ENCODE measurements at regions of chr16 and their contacts with region 1.

Region 1: GRCh38 chr16:106623-107324 is 28.7 kb downstream of the MPG start:
- DNase-seq: peak; percentile 68
- ATAC-seq: peak; percentile 87
- H3K4me3 Mint-ChIP-seq: no peak overlapping the region
- H3K27ac Mint-ChIP-seq: no peak overlapping the region
- H3K4me1 Mint-ChIP-seq: peaks cover 2% of the 10 kb centered on the region
- H3K27me3 Mint-ChIP-seq: no peaks in the 10 kb centered on the region

Region 2: GRCh38 chr16:84718-85406 is 21.9 kb before region 1 on chr16:
- CTCF ChIA-PET with region 1: interaction called, 10 read pairs
- DNase-seq: peak; percentile 89
- ATAC-seq: peak; percentile 86
- H3K4me3 Mint-ChIP-seq: no peak overlapping the region
- H3K27ac Mint-ChIP-seq: peak overlapping the region; percentile 92
- H3K4me1 Mint-ChIP-seq: peaks cover 25% of the 10 kb centered on the region
- H3K27me3 Mint-ChIP-seq: no peaks in the 10 kb centered on the region

Region 3: DNA sequence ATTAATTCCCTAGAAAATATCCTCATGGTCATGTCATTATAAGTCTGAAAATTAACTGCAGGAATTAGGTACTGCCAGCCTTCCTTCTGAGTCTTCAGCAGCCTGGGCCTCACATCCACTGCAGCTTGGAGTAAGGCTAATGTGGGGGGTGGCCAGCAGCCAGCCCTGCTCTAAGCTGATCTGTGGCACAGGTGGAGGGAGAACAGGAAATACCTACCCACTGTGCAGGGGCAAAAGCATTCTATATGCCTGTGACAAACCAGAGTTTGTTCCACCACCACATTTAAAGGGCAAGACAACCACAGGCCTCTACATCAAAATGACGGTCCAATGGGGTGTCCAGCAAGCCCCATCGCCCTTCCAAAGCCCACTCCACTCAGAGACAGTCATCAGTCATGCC is 22.3 kb after region 1 on chr16:
- CTCF ChIA-PET with region 1: interaction called, 11 read pairs
- DNase-seq: no peak
- ATAC-seq: peak; percentile 42
- H3K4me3 Mint-ChIP-seq: no peak overlapping the region
- H3K27ac Mint-ChIP-seq: no peak overlapping the region
- H3K4me1 Mint-ChIP-seq: peaks cover 34% of the 10 kb centered on the region
- H3K27me3 Mint-ChIP-seq: no peaks in the 10 kb centered on the region

Region 4: DNA sequence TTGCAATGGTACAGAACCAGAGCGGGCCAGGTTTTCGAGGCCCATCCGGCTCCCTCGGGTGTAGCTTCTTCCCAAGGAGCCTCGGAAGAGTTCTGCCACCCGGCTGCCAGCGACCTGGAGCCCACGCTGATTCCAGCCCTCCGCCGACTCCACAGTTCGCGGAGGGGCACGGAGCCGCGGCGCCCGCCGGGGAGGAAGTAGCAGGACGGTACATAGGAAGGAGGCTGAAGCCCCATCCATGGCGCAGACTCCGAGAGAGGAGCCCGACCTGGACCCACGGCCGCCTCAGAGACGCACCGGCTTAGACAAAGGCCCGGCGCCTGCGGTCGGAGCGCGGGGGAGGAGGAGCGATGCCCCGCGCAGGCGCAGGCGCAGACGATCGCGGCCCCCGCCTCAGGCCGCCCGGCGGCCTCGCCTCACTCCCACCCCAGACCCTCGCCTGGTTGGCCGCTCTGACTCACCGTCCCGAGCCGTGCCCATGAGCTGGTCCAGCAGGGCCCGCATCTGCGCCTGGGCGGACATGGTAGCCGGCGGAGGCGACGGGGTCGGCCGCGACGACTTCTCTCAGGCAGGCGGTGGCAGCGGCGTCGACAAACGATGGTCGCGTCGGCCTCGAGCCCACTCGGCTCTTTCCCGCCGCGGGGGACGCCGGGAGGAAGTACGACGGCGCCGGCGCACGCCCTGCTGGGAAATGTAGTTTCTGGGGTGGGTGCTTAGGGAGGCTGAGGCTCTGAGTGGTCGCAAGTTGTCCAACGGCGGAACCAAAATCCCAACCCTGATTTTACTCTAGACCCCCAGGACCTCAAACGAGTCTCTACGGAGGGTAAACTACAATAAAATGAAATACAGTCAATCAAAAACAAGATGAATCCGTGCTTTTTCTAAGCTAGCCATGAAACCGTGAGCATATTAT is 122.3 kb after region 1 on chr16 and contains the start of gene LUC7L:
- CTCF ChIA-PET with region 1: interaction called, 12 read pairs
- DNase-seq: peak; percentile 92
- ATAC-seq: peak; percentile 93
- H3K4me3 Mint-ChIP-seq: peak within 1 kb of the TSS; percentile 81
- H3K27ac Mint-ChIP-seq: peak within 1 kb of the TSS; percentile 92
- H3K4me1 Mint-ChIP-seq: peaks cover 31% of the 10 kb centered on the region
- H3K27me3 Mint-ChIP-seq: no peaks in the 10 kb centered on the region
- total RNA-seq, gene LUC7L: 60.0 to 65.3 TPM

Measured in activated CD8-positive, alpha-beta memory T cell treated with anti-CD3 and anti-CD28 coated beads, Interleukin-2, amount 10 ng/mL, durations not matched to agents 7 days and 5 days (primary cell).